Activated naive CD4-positive, alpha-beta T cell treated with anti-CD3 and anti-CD28 coated beads for 36 hours (primary cell): ENCODE measurements at regions of chr11 and their contacts with region 1.

Region 1: DNA sequence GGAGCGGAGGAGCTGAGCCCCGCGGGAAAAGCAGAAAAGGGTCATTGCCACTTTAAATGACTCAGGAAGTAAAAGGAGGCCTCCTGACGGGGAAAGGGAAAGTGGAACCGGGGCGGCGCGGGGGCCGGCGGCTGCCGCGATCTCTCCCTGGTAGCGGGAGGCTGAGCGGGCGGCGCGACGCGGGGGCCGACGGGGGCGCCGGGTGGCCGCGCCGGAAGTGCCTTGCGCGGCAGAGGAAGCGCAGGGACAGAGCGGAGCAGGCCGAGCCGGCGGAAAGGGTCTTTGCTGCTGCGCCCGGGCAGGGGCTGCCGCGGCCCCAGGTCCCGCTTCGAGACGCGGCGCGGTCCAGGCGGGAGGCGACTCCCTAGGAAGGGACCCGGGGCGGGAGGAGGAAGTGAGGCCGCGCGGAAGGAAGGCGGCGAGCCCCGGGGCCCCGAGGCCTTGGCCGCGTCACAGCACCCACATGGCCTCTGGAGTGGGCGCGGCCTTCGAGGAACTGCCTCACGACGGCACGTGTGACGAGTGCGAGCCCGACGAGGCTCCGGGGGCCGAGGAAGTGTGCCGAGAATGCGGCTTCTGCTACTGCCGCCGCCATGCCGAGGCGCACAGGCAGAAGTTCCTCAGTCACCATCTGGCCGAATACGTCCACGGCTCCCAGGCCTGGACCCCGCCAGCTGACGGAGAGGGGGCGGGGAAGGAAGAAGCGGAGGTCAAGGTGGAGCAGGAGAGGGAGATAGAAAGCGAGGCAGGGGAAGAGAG is at the start of gene TRIM44:
- DNase-seq: peak; percentile 90
- H3K4me3 Mint-ChIP-seq: peak within 1 kb of the TSS; percentile 93
- H3K27ac Mint-ChIP-seq: peak within 1 kb of the TSS; percentile 92
- H3K4me1 Mint-ChIP-seq: peaks cover 45% of the 10 kb centered on the region
- H3K27me3 Mint-ChIP-seq: no peaks in the 10 kb centered on the region
- total RNA-seq, gene TRIM44: 35.0 to 37.8 TPM

Region 2: DNA sequence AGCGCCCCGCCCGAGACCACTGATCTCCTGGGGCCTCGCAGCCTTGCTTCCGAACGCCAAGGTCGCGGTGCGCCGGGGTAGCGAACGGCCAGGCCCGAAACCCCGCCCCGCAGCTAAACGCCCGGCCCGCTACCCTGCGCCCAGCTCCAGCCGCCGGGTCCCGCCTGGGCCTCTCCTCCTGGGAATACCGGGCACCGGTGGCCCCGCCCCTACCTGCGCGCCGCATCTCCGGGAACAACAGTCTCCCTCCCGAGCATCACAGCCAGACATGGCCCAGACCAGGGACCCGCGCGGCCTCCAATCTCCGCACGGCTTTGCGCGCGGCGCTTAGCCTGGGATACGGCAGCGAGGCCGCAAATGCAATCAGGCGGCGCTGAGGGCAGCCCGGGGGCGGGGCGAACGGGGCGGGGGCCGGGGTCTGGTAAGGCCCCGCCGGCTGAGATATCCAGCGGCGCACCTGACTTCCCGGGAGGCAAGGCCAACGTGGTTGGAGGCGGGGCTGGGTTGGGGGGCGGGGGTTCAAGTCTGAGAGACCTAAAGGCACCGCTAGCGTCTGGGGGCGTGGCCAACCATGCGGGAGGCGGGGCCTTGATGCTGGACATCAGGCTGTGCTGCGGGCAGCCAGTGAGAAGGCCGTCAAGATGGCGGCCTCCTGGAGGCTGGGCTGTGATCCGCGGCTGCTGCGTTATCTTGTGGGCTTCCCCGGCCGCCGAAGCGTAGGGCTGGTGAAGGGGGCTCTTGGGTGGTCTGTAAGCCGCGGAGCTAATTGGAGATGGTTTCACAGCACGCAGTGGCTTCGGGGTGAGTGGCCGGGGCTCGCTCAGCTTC is 746.6 kb before region 1 on chr11 and contains the starts of genes APIP and PDHX:
- CTCF ChIA-PET with region 1: no interaction called
- intact Hi-C with region 1: loop called (anchors 5 kb)
- DNase-seq: peak; percentile 98
- H3K4me3 Mint-ChIP-seq: peak within 1 kb of the TSS; percentile 99
- H3K27ac Mint-ChIP-seq: peak within 1 kb of the TSS; percentile 96
- H3K4me1 Mint-ChIP-seq: peaks cover 44% of the 10 kb centered on the region
- H3K27me3 Mint-ChIP-seq: no peaks in the 10 kb centered on the region
- total RNA-seq, gene APIP: 42.4 to 42.5 TPM
- total RNA-seq, gene PDHX: 38.2 to 40.9 TPM

Region 3: DNA sequence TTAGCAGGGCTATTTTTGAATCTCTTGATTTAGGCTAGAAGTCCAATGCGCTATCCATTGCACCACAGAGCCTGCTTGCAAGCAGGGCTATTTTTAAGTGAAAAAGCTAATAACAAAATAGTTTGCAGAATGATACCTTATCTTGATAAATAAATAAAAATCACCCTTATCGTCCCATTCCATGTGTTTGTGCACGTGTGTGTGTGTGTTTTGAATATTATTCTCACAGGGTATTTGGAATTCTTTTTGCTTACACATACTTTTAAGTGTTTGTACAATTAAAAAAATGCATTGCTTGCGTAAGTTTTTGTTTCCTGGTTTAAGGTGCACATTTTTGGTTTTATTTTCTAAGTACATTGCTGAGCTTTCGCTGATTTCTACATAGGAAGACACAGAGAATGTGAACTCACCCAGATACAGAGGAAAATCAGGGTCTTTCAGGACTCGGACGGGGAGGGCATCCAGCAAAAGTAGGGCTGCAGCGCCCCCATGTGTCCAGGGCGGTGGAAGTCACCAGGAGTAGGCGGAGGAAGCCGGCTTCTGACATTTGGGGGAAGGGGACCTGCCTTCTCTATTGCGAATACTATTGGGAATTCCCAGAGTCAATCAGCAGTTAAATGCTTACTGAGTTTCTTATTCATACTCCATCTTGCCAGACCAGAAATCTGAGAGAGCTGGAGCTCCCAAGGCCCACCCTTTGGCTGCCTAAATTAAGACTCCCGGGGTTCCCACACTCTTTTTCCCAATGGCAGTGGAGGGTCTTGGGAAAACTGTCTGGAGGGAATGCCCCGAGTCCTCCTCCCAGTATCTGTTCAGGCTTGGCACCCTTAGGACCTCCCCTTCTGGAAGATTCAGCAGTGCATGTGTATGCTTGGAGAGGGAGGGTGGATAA is 270.7 kb before region 1 on chr11:
- CTCF ChIA-PET with region 1: no interaction called
- intact Hi-C with region 1: no loop called
- DNase-seq: peak; percentile 93
- H3K4me3 Mint-ChIP-seq: peak overlapping the region; percentile 17
- H3K27ac Mint-ChIP-seq: no peak overlapping the region
- H3K4me1 Mint-ChIP-seq: peaks cover 39% of the 10 kb centered on the region
- H3K27me3 Mint-ChIP-seq: no peaks in the 10 kb centered on the region

Region 4: GRCh38 chr11:35598254-35599125 is 64.3 kb before region 1 on chr11:
- CTCF ChIA-PET with region 1: no interaction called
- intact Hi-C with region 1: loop called (anchors 1 kb)
- DNase-seq: peak; percentile 78
- H3K4me3 Mint-ChIP-seq: no peak overlapping the region
- H3K27ac Mint-ChIP-seq: peak overlapping the region; percentile 68
- H3K4me1 Mint-ChIP-seq: peaks cover 17% of the 10 kb centered on the region
- H3K27me3 Mint-ChIP-seq: peaks cover 60% of the 10 kb centered on the region

Region 5: DNA sequence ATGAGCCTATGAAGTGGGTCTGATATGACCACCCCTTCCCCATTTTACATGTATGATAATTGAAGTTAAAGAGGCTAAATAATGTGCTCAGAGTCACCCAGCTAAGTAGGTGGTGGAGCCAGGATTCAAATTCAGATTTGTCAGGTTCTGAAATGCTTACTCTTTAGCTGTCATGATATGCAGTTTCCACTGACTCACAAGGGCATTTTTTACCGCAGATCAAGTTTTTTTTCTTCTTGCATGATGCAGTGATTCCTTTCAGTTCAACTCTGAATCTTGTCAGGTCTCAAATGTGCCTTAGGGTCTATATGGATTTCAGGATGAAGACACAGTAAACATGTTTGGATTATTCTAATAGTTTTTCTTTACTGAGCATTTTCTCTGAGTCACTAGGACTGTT is 12.8 kb before region 1 on chr11:
- CTCF ChIA-PET with region 1: interaction called, 3 read pairs
- intact Hi-C with region 1: loop called (anchors 1 kb)
- DNase-seq: peak; percentile 38
- H3K4me3 Mint-ChIP-seq: no peak overlapping the region
- H3K27ac Mint-ChIP-seq: no peak overlapping the region
- H3K4me1 Mint-ChIP-seq: peaks cover 8% of the 10 kb centered on the region
- H3K27me3 Mint-ChIP-seq: peaks cover 20% of the 10 kb centered on the region

Region 6: DNA sequence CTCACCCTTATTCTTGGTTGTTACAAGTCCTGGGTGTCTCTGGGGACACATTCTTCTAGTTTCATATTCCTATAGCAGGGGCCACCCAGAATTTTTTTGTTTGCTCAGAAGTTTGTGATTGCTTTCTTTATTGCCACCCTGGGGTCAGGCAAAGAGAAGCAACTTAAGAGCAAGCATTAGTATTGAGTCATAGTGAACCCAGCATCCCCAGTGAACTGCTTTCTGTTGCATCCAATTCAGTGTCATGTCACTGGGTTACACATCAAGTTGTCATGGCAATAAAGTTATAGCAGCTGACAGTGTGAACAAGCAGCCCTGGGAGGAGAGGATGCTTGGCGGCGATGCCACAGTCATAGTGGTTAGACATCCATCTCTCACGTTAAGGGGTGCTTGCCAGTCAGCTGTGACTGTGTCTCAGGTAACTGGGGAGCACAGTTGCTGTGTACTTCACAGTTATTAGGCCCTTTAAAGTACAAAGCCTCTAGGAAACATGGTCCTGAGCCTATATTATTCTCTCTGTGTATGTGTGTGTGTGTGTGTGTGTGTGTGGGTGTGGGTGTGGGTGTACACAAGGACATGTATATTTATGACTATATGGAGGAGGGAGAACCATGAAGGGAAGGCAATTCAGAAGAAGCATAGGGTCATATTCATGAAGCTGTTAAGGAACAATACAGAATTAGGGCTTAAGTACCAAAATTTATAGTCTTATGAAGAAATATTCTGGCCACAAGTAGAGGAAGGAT is 52.2 kb after region 1 on chr11:
- CTCF ChIA-PET with region 1: no interaction called
- intact Hi-C with region 1: loop called (anchors 2 kb)
- DNase-seq: peak; percentile 64
- H3K4me3 Mint-ChIP-seq: no peak overlapping the region
- H3K27ac Mint-ChIP-seq: peak overlapping the region; percentile 20
- H3K4me1 Mint-ChIP-seq: peaks cover 31% of the 10 kb centered on the region
- H3K27me3 Mint-ChIP-seq: no peaks in the 10 kb centered on the region

Region 7: GRCh38 chr11:35725880-35726279 is 63.1 kb after region 1 on chr11:
- CTCF ChIA-PET with region 1: no interaction called
- intact Hi-C with region 1: no loop called
- DNase-seq: no peak
- H3K4me3 Mint-ChIP-seq: no peak overlapping the region
- H3K27ac Mint-ChIP-seq: no peak overlapping the region
- H3K4me1 Mint-ChIP-seq: peaks cover 15% of the 10 kb centered on the region
- H3K27me3 Mint-ChIP-seq: no peaks in the 10 kb centered on the region

Region 8: DNA sequence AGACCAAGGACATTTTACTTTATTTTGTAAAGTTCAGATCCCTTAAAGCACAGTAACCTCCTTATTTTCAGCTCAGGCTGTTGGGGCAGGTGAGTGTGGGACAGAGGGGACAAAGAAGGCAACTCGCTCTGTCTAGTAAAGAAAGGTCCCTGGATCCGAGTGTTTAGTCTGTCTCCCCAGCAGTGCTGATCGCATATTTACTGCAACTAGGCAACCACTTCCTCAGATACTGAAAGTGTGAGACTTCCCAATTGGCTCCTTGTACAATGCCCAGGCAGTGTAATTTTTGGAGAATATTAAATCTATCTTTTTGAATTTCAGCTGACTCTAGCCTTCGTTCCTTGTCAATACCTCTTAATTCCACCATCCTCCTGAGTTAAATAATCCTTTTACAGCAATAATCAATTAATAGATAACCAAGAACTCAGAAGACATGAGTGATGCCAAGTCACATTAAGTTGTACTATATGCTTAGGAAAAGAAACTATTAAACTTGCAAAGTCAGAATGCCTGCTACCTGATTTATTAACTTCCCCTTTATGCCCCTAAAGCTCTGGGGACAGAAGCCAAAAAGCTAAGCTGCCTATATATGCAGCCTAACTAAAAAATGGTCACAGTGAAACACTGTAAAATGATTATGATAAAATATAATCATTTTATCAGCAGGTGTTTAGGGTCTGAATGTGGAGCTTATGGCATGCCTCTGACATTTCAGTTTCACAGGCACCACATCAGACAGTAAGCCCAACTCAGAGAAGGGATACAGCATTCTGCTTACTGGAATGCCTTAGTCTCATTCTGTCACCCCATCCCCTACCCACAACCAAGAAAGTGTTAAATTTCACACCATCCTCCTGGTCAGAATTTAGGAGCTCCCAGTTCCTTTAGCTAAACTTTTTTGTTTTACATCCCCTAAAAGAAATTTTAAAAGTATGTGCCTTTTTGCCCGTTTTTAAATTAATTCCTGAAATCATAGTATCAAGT is 138.4 kb after region 1 on chr11:
- CTCF ChIA-PET with region 1: no interaction called
- intact Hi-C with region 1: loop called (anchors 5 kb)
- DNase-seq: no peak
- H3K4me3 Mint-ChIP-seq: no peak overlapping the region
- H3K27ac Mint-ChIP-seq: no peak overlapping the region
- H3K4me1 Mint-ChIP-seq: peaks cover 4% of the 10 kb centered on the region
- H3K27me3 Mint-ChIP-seq: no peaks in the 10 kb centered on the region

Region 9: GRCh38 chr11:36509694-36510566 is 847.1 kb after region 1 on chr11 and contains the start of gene TRAF6:
- CTCF ChIA-PET with region 1: no interaction called
- intact Hi-C with region 1: loop called (anchors 1 kb)
- DNase-seq: peak; percentile 91
- H3K4me3 Mint-ChIP-seq: peak within 1 kb of the TSS; percentile 97
- H3K27ac Mint-ChIP-seq: peak within 1 kb of the TSS; percentile 90
- H3K4me1 Mint-ChIP-seq: peaks cover 30% of the 10 kb centered on the region
- H3K27me3 Mint-ChIP-seq: no peaks in the 10 kb centered on the region
- total RNA-seq, gene TRAF6: 8.3 to 8.7 TPM